Natural killer cell (primary cell): ENCODE measurements at regions of chr13 and their contacts with region 1.

Region 1: GRCh38 chr13:32586080-32586900 is at the start of gene PDS5B:
- DNase-seq: peak; percentile 97 to 98
- ATAC-seq: peak; percentile 88 to 98 (median 91)
- H3K4me3 ChIP-seq: peak within 1 kb of the TSS; percentile 88
- H3K4me3 Mint-ChIP-seq: peak within 1 kb of the TSS; percentile 97
- H3K27ac ChIP-seq: peak within 1 kb of the TSS; percentile 88
- H3K27ac Mint-ChIP-seq: peak within 1 kb of the TSS; percentile 94 to 95
- H3K4me1 ChIP-seq: peaks cover 9% of the 10 kb centered on the region
- H3K4me1 Mint-ChIP-seq: peaks cover 40 to 41% of the 10 kb centered on the region in 2 donors
- H3K27me3 ChIP-seq: no peaks in the 10 kb centered on the region
- H3K27me3 Mint-ChIP-seq: peaks cover 0 to 3% of the 10 kb centered on the region in 2 donors
- CTCF ChIP-seq: peak; percentile 87
- total RNA-seq, gene PDS5B: 59.4 to 70.6 (median 64.7) TPM

Region 2: DNA sequence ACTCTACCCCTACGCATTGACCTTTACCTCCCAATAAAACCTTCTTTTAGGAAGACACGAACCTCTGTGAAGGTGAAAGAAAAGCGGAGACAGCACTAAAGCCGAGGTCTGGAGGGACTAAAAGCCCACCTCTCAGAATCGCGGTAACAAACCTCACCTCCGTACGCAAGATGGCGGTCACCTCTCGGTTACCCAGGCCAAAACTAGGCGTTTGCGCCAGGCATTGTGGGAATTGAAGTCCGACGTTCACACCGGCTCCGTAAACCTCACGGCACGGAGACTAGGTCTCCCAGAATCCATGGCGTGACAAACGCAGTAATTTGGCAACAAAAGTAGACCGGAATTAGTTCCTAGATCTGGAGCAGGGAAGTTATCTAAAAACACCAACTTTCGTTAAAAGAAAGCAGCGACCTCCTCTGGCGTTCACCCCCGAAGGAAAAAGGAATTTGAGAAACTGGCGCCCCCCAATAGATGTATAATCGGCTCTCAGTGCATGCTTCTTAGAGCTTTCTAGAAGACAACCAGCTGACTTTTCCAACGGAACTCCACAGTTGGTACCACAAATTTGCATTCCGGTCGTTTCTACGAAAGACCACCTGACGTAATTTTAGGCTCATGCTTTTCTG is 47.6 kb before region 1 on chr13 and contains the start of gene N4BP2L2:
- intact Hi-C with region 1: loop called (anchors 1 kb)
- DNase-seq: peak; percentile 85 to 97
- ATAC-seq: peak; percentile 94 to 98 (median 96)
- H3K4me3 ChIP-seq: peak within 1 kb of the TSS; percentile 96
- H3K4me3 Mint-ChIP-seq: peak within 1 kb of the TSS; percentile 99
- H3K27ac ChIP-seq: peak within 1 kb of the TSS; percentile 99
- H3K27ac Mint-ChIP-seq: peak within 1 kb of the TSS; percentile 98 to 99
- H3K4me1 ChIP-seq: peaks cover 15% of the 10 kb centered on the region
- H3K4me1 Mint-ChIP-seq: peaks cover 48 to 50% of the 10 kb centered on the region in 2 donors
- H3K27me3 ChIP-seq: no peaks in the 10 kb centered on the region
- H3K27me3 Mint-ChIP-seq: peaks cover 0 to 4% of the 10 kb centered on the region in 2 donors
- CTCF ChIP-seq: no peak
- total RNA-seq, gene N4BP2L2: 195 to 247 (median 221) TPM

Region 3: GRCh38 chr13:32639502-32640105 is 53.3 kb after region 1 on chr13:
- intact Hi-C with region 1: loop called (anchors 1 kb)
- DNase-seq: peak in 1 of 2 donors; percentile 83
- ATAC-seq: peak; percentile 89 to 97 (median 93)
- H3K4me3 ChIP-seq: no peak overlapping the region
- H3K4me3 Mint-ChIP-seq: no peak overlapping the region
- H3K27ac ChIP-seq: no peak overlapping the region
- H3K27ac Mint-ChIP-seq: no peak overlapping the region
- H3K4me1 ChIP-seq: no peaks in the 10 kb centered on the region
- H3K4me1 Mint-ChIP-seq: peaks cover 26 to 34% of the 10 kb centered on the region in 2 donors
- H3K27me3 ChIP-seq: no peaks in the 10 kb centered on the region
- H3K27me3 Mint-ChIP-seq: no peaks in the 10 kb centered on the region
- CTCF ChIP-seq: peak; percentile 83

Region 4: DNA sequence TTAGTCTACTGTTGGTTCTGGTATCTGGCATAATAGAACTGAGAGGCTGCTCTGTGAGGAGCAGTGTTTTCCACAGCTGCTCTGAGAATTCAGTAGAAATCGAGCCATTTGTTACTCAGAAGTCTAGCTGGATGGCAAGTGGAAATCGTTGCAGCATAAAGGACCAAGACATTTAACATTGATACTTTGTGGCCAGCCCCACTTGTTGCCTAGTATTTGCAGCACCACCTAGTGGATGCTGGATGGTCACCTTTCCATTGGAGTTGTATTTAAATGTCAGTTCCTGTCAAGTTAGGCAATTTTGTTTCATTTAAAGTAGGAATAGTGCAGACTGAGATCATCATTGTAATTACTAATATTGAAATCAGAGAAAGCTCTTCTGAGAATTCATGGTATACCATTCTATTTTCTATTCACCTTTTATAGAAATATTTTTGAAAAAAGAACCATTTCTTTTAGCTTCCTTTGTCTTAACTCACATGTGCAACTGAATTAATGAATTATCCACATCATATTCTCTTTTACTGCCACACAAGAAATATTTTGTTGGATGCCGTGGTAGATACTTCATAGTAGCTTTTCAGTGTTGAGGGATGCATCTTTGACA is 64.5 kb after region 1 on chr13:
- intact Hi-C with region 1: loop called (anchors 2 kb)
- DNase-seq: peak in 1 of 2 donors; percentile 79
- ATAC-seq: peak; percentile 77 to 89 (median 86)
- H3K4me3 ChIP-seq: no peak overlapping the region
- H3K4me3 Mint-ChIP-seq: no peak overlapping the region
- H3K27ac ChIP-seq: no peak overlapping the region
- H3K27ac Mint-ChIP-seq: peak overlapping the region; percentile 37 to 39
- H3K4me1 ChIP-seq: peaks cover 3% of the 10 kb centered on the region
- H3K4me1 Mint-ChIP-seq: peaks cover 28 to 34% of the 10 kb centered on the region in 2 donors
- H3K27me3 ChIP-seq: no peaks in the 10 kb centered on the region
- H3K27me3 Mint-ChIP-seq: no peaks in the 10 kb centered on the region
- CTCF ChIP-seq: peak; percentile 81

Region 5: GRCh38 chr13:32669030-32669646 is 82.8 kb after region 1 on chr13:
- intact Hi-C with region 1: loop called (anchors 5 kb)
- DNase-seq: peak in 1 of 2 donors; percentile 71
- ATAC-seq: peak; percentile 44 to 72 (median 63)
- H3K4me3 ChIP-seq: no peak overlapping the region
- H3K4me3 Mint-ChIP-seq: no peak overlapping the region
- H3K27ac ChIP-seq: no peak overlapping the region
- H3K27ac Mint-ChIP-seq: no peak overlapping the region
- H3K4me1 ChIP-seq: no peaks in the 10 kb centered on the region
- H3K4me1 Mint-ChIP-seq: no peaks in the 10 kb centered on the region
- H3K27me3 ChIP-seq: no peaks in the 10 kb centered on the region
- H3K27me3 Mint-ChIP-seq: no peaks in the 10 kb centered on the region
- CTCF ChIP-seq: peak; percentile 74

Region 6: DNA sequence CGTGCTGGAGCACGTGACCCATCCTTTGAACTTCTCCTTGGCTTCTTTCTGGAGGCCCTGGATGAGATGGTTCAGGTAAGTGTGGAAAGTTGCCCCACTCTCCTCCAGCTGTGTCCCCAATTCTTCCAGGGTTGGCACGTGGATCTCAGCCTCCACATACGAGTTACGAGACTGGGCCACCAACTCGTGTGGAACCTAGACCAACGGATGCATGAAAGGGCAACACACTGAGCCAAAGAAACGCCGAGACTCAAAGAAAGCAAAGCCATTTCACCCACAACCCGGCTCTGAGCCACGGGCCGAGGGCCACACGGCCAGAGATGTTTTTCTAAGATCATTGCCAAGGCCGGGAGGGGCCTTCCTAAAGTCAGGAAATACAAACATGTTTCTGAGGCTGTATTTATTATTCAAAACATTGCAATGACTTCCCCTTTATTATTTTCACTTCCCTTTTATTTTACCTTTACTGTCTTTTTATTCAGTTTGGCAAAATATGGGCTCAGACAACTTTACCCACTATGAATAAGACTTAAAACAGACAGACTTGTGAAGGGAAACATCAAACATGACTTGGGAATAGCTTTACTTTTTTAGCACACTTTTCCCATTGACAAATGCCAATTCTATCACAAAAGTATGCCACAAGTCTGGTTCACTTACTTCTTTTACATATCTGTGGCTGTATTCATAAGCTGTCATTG is 524.6 kb after region 1 on chr13:
- intact Hi-C with region 1: no loop called
- DNase-seq: no peak
- ATAC-seq: no peak
- H3K4me3 ChIP-seq: no peak overlapping the region
- H3K4me3 Mint-ChIP-seq: no peak overlapping the region
- H3K27ac ChIP-seq: no peak overlapping the region
- H3K27ac Mint-ChIP-seq: no peak overlapping the region
- H3K4me1 ChIP-seq: peaks cover 8% of the 10 kb centered on the region
- H3K4me1 Mint-ChIP-seq: no peaks in the 10 kb centered on the region
- H3K27me3 ChIP-seq: no peaks in the 10 kb centered on the region
- H3K27me3 Mint-ChIP-seq: peaks cover 0 to 3% of the 10 kb centered on the region in 2 donors
- CTCF ChIP-seq: no peak